Heart left ventricle (tissue), 16 donors: ENCODE measurements at regions of chr2 and their contacts with region 1.

Region 1: DNA sequence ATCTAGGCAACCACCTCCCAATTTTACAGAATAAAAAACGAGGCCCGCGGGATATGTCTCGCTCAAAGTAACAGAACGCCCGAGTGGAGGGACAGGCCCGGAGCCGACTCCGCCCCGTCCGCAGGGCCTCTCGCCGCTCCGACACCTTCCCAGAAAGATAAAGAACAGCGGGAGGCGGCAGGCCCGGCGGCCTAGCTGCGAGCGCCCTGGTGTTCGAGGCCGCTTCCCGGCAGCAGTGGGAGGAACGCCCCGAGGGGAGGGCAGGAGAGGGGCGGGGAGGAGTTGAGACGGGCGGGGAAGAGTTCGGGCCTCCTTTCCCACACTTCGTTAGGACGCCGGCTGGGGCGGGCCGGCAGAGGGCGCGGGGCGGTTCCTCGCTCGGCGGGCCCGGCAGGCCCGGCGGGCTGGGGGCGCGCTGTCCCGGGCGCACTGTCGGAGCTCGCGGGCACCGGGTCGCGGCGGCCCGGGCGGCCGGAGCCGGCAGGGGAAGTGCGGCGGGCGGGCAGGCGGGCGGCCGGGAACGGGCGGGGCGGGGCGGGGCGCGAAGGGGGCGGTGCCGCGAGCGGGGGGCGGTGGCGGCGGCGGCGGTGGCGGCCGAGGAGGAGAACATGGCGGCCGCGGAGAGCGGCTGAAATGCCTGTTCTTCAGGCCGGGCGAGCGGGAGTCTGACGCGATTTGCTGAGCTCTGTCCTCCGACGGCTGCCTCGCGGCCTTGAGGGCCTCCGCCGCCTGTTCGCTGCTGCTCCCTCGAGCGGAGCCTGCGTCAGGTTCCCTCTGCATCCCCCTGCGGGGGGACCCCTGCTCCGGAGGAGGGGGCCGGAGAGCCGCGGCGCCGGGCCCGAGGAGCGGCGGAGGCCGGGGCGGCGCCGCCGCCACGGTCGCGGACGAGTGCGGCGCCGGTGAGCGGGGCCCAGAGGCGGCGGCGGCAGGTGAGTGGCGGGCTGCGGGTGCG is at the start of gene NCOA1:
- DNase-seq: peak; percentile 92 to 96 (median 93)
- ATAC-seq: peak; percentile 85 to 96 (median 93)
- H3K4me3 ChIP-seq: peak within 1 kb of the TSS; percentile 74 to 98 (median 86)
- H3K27ac ChIP-seq: peak within 1 kb of the TSS; percentile 83 to 98 (median 94)
- H3K4me1 ChIP-seq: peaks cover 5 to 44% (median 31%) of the 10 kb centered on the region in 12 donors
- H3K27me3 ChIP-seq: no peaks in the 10 kb centered on the region
- CTCF ChIP-seq: peak in 9 of 12 donors; percentile 12 to 41 (median 25)
- POLR2A ChIP-seq: peak in 1 of 2 donors; percentile 30
- total RNA-seq, gene NCOA1: 23.9 to 42.3 (median 33.2) TPM

Region 2: DNA sequence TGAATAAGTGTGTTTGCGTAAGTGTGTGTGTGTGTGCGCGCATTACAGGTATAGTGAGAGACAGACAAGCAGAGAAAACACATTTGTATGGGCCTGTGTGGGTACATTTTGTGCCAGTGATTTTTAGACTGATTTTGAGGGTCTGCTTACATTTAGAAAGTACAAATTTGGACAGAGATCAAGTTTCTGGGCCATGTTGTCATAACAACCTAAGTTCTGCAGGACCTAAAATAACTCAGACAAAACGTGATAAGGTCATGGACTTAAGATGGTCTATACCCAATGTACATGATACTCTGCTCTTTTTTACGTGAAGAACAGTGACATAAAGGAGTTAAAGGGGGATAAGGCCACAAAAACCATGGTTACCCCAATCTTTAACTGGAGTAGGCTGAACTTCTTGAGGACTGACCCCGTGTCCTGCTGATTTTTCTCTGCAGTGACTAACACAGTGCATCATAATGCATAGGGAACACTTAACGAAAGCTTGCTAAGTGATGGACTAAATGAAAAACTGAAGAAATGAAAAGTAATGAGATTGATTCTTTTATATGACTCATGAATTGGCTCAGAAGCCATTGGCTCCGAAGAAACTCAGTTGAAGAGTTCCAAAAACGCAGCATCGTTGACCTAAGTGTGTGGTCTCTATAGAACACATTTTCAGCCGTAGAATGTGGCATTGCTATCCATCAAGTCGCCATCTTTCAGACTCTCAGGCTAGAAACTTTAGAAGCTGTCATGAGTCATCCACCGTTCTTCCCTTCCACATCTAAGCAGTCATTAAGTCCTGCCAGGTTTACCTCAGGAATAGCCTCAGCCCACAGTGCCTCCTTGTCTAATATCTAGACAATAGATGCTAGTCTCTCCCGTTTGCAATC is 61.5 kb before region 1 on chr2:
- intact Hi-C with region 1: loop called in 6 of 10 experiments (anchors 2 to 10 kb)
- DNase-seq: no peak
- ATAC-seq: no peak
- H3K4me3 ChIP-seq: no peak overlapping the region
- H3K27ac ChIP-seq: no peak overlapping the region
- H3K4me1 ChIP-seq: peaks cover 0 to 32% (median 11%) of the 10 kb centered on the region in 12 donors
- H3K27me3 ChIP-seq: no peaks in the 10 kb centered on the region
- CTCF ChIP-seq: no peak
- POLR2A ChIP-seq: no peak

Region 3: DNA sequence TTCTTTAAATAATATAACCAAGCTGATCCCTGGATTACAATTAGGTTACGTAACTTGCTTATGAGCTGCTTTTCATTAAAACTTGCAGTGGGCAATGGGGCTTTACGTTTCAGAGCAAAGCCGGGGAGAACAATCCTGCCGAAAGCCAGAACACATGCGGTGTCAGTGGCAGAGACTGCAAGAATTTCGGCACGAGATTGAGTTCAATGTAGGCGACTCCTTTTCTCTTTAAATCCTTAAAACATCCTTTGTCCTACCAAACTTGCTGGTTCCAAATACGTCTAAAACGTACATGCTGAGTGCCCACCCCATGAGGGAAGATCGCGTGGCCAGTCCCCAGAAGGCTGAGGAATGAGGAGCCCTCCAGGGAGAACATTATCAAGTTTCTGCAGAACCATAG is 36.7 kb before region 1 on chr2:
- intact Hi-C with region 1: loop called in 1 of 10 experiments (anchors 2 kb)
- DNase-seq: no peak
- ATAC-seq: peak in 1 of 4 donors; percentile 16
- H3K4me3 ChIP-seq: peak overlapping the region in 10 of 12 donors; percentile 13 to 54 (median 41)
- H3K27ac ChIP-seq: peak overlapping the region; percentile 1 to 67 (median 31)
- H3K4me1 ChIP-seq: peaks cover 0 to 26% (median 4%) of the 10 kb centered on the region in 12 donors
- H3K27me3 ChIP-seq: no peaks in the 10 kb centered on the region
- CTCF ChIP-seq: no peak
- POLR2A ChIP-seq: no peak

Region 4: GRCh38 chr2:24652265-24653182 is 161.6 kb after region 1 on chr2:
- intact Hi-C with region 1: loop called in 1 of 10 experiments (anchors 10 kb)
- DNase-seq: no peak
- ATAC-seq: peak in 1 of 4 donors; percentile 47
- H3K4me3 ChIP-seq: no peak overlapping the region
- H3K27ac ChIP-seq: no peak overlapping the region
- H3K4me1 ChIP-seq: peaks cover 0 to 31% (median 9%) of the 10 kb centered on the region in 12 donors
- H3K27me3 ChIP-seq: no peaks in the 10 kb centered on the region
- CTCF ChIP-seq: no peak
- POLR2A ChIP-seq: no peak

Region 5: GRCh38 chr2:24721470-24721869 is 230.5 kb after region 1 on chr2:
- intact Hi-C with region 1: loop called in 2 of 10 experiments (anchors 1 to 10 kb)
- DNase-seq: peak; percentile 66 to 89 (median 84)
- ATAC-seq: peak; percentile 90 to 98 (median 93)
- H3K4me3 ChIP-seq: no peak overlapping the region
- H3K27ac ChIP-seq: peak overlapping the region in 10 of 12 donors; percentile 5 to 55 (median 36)
- H3K4me1 ChIP-seq: peaks cover 0 to 40% (median 17%) of the 10 kb centered on the region in 12 donors
- H3K27me3 ChIP-seq: no peaks in the 10 kb centered on the region
- CTCF ChIP-seq: no peak
- POLR2A ChIP-seq: no peak